ENCODE measurements at regions of chr5 and their contacts with region 1.

Region 1: DNA sequence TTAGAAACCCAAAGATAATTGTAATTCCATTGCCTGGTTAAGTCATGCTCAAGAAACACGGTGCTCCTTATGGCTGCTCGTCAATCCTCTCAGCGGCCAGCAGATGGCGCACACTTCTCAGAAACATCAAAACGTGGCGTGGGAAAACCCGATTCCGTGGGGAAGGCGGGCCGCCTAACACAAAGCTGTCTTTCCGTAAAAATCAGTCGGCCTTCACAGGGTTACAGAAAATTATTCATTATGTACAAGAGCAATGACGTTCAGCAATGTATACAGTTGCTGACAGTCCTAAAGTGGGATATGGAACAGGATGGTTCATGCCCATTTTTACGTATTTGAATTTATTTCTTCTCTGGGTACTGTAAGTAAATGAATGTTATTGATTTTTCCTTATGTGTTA is 83.5 kb downstream of the PDE4D start:
- DNase-seq: peak; percentile 71
- ATAC-seq: peak; percentile 82
- H3K4me3 ChIP-seq: no peak overlapping the region
- H3K27ac ChIP-seq: no peak overlapping the region
- H3K4me1 ChIP-seq: no peaks in the 10 kb centered on the region
- H3K27me3 ChIP-seq: peaks cover 9% of the 10 kb centered on the region
- CTCF ChIP-seq: peak; percentile 89
- POLR2A ChIP-seq: no peak
- RAD21 ChIP-seq: peak; percentile 76

Region 2: GRCh38 chr5:59055745-59056448 is 754.1 kb before region 1 on chr5:
- CTCF ChIA-PET with region 1: no interaction called
- POLR2A ChIA-PET with region 1: no interaction called
- dilution Hi-C with region 1: no loop called
- in situ Hi-C with region 1: no loop called
- intact Hi-C with region 1: no loop called
- DNase-seq: no peak
- ATAC-seq: peak; percentile 17; the same call in 1 of the 2 replicates
- H3K4me3 ChIP-seq: no peak overlapping the region
- H3K27ac ChIP-seq: no peak overlapping the region
- H3K4me1 ChIP-seq: no peaks in the 10 kb centered on the region
- H3K27me3 ChIP-seq: no peaks in the 10 kb centered on the region
- CTCF ChIP-seq: no peak
- POLR2A ChIP-seq: no peak
- RAD21 ChIP-seq: no peak

Region 3: GRCh38 chr5:59275510-59276324 is 534.3 kb before region 1 on chr5:
- CTCF ChIA-PET with region 1: no interaction called
- POLR2A ChIA-PET with region 1: no interaction called
- dilution Hi-C with region 1: no loop called
- in situ Hi-C with region 1: no loop called
- intact Hi-C with region 1: no loop called
- DNase-seq: peak; percentile 6
- ATAC-seq: peak; percentile 48; the same call in 1 of the 2 replicates
- H3K4me3 ChIP-seq: peak overlapping the region; percentile 32
- H3K27ac ChIP-seq: no peak overlapping the region
- H3K4me1 ChIP-seq: no peaks in the 10 kb centered on the region
- H3K27me3 ChIP-seq: no peaks in the 10 kb centered on the region; the same call in 1 of the 2 replicates
- CTCF ChIP-seq: no peak
- POLR2A ChIP-seq: no peak
- RAD21 ChIP-seq: no peak

Region 4: GRCh38 chr5:59293697-59294096 is 516.3 kb before region 1 on chr5:
- CTCF ChIA-PET with region 1: no interaction called
- POLR2A ChIA-PET with region 1: no interaction called
- dilution Hi-C with region 1: no loop called
- in situ Hi-C with region 1: no loop called
- intact Hi-C with region 1: no loop called
- DNase-seq: no peak
- ATAC-seq: no peak
- H3K4me3 ChIP-seq: no peak overlapping the region
- H3K27ac ChIP-seq: no peak overlapping the region
- H3K4me1 ChIP-seq: no peaks in the 10 kb centered on the region
- H3K27me3 ChIP-seq: no peaks in the 10 kb centered on the region
- CTCF ChIP-seq: no peak
- POLR2A ChIP-seq: no peak
- RAD21 ChIP-seq: no peak

Region 5: DNA sequence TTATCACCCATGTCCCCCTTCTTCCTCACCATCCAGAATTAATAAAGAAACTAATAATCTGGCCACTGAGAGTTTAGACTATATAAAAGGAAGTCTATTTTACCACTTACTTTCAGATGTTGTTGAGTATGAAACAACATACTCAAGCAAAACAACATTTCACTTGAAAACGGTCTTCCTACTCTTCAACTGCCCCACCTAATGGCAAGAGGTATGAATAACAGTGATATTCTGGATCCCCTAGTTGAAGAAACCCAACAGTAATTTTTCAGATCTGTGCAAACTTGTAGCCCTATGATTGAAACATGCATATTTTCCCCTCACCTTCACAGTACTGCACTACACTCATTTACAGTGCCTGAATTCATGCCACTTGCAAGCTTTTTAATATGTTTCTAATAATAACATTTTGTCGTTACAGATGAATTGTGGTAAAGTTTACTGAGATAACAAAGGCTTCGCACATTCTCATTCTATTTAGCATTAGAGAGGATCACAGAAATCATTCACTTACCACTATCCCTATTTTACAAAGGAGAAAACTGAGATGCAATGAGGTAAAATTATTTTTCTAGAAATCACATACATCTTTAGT is 351.4 kb after region 1 on chr5:
- CTCF ChIA-PET with region 1: interaction called, 3 read pairs
- POLR2A ChIA-PET with region 1: no interaction called
- dilution Hi-C with region 1: no loop called
- in situ Hi-C with region 1: loop called (anchors 10 kb)
- intact Hi-C with region 1: loop called (anchors 1 kb)
- DNase-seq: peak; percentile 19
- ATAC-seq: peak; percentile 62; the same call in 1 of the 2 replicates
- H3K4me3 ChIP-seq: no peak overlapping the region
- H3K27ac ChIP-seq: no peak overlapping the region
- H3K4me1 ChIP-seq: no peaks in the 10 kb centered on the region
- H3K27me3 ChIP-seq: no peaks in the 10 kb centered on the region
- CTCF ChIP-seq: peak; percentile 53
- POLR2A ChIP-seq: no peak
- RAD21 ChIP-seq: peak; percentile 45

Region 6: DNA sequence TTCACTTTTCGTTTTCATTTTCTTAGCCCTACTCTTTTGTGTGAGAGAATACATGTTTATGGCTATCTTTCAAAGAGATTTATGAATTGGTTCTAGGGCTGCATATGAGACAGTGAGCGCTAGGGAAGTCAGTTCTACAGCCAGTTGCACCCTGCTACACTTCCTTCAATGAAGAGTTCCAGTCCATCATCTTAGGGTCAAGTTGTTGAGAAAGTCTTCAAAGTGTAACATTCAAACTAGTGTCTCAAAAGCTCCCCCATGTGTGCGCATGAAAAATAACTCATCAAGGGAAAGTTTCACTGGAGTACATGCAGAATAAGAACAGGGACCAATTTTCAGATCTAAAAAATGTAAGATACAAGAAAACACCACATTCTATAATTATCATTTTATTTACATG is 572.7 kb after region 1 on chr5:
- CTCF ChIA-PET with region 1: no interaction called
- POLR2A ChIA-PET with region 1: no interaction called
- dilution Hi-C with region 1: no loop called
- in situ Hi-C with region 1: loop called (anchors 25 kb)
- intact Hi-C with region 1: loop called (anchors 1 kb)
- DNase-seq: peak; percentile 20
- ATAC-seq: no peak
- H3K4me3 ChIP-seq: no peak overlapping the region
- H3K27ac ChIP-seq: no peak overlapping the region
- H3K4me1 ChIP-seq: no peaks in the 10 kb centered on the region
- H3K27me3 ChIP-seq: no peaks in the 10 kb centered on the region
- CTCF ChIP-seq: peak; percentile 23; the same call in 1 of the 2 replicates
- POLR2A ChIP-seq: no peak
- RAD21 ChIP-seq: no peak; the same call in 1 of the 2 replicates

Region 7: GRCh38 chr5:60649283-60649917 is 839.4 kb after region 1 on chr5:
- CTCF ChIA-PET with region 1: no interaction called
- POLR2A ChIA-PET with region 1: no interaction called
- dilution Hi-C with region 1: no loop called
- in situ Hi-C with region 1: no loop called
- intact Hi-C with region 1: loop called (anchors 1 kb)
- DNase-seq: peak; percentile 51
- ATAC-seq: peak; percentile 34
- H3K4me3 ChIP-seq: no peak overlapping the region
- H3K27ac ChIP-seq: no peak overlapping the region
- H3K4me1 ChIP-seq: no peaks in the 10 kb centered on the region
- H3K27me3 ChIP-seq: no peaks in the 10 kb centered on the region
- CTCF ChIP-seq: peak; percentile 69
- POLR2A ChIP-seq: no peak
- RAD21 ChIP-seq: peak; percentile 52

Region 8: GRCh38 chr5:60677844-60678664 is 868.0 kb after region 1 on chr5:
- CTCF ChIA-PET with region 1: no interaction called
- POLR2A ChIA-PET with region 1: no interaction called
- dilution Hi-C with region 1: no loop called
- in situ Hi-C with region 1: loop called (anchors 10 kb)
- intact Hi-C with region 1: no loop called
- DNase-seq: peak; percentile 58
- ATAC-seq: peak; percentile 68
- H3K4me3 ChIP-seq: no peak overlapping the region
- H3K27ac ChIP-seq: peak overlapping the region; percentile 29; the same call in 1 of the 2 replicates
- H3K4me1 ChIP-seq: peaks cover 6% of the 10 kb centered on the region; the same call in 1 of the 2 replicates
- H3K27me3 ChIP-seq: no peaks in the 10 kb centered on the region
- CTCF ChIP-seq: peak; percentile 63
- POLR2A ChIP-seq: no peak
- RAD21 ChIP-seq: peak; percentile 52

Measured in IMR-90 (cell line).